ENCODE measurements at regions of chr7 and their contacts with region 1.

Region 1: GRCh38 chr7:128455551-128456254 is at the start of gene HILPDA:
- DNase-seq: peak; percentile 93
- H3K4me3 Mint-ChIP-seq: peak within 1 kb of the TSS; percentile 91
- H3K27ac Mint-ChIP-seq: peak within 1 kb of the TSS; percentile 93
- H3K4me1 Mint-ChIP-seq: peaks cover 56% of the 10 kb centered on the region
- H3K27me3 Mint-ChIP-seq: peaks cover 10% of the 10 kb centered on the region
- total RNA-seq, gene HILPDA: 10.8 to 11.9 TPM

Region 2: DNA sequence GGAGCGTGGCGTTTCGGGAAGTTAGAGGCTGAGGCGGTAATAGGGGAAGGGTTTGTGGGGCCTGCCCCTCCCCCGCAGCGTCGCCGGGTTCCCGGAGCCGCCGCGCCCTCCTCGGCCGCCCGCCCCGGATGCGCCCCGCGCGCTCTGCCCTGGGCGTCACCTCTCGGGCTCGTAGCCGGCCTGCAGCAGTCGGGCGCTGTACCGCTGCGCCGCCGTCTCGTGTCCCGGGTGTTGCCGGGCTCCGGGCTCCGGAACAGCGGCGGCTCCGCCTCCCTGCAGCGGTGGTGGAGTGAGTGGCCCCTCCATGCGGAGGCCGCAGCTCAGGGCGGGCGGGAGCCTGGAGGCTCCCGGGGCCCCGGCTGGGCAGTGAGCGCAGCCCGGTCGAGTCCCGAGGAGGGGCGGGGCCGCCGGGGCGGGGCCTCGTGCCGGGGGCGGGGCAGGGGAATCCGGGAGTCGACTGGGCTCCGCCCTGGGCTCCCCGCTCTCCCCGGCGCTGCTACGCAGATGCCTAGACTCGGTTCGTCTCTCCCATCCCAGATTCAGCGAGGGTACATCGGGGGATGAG is 46.0 kb before region 1 on chr7 and contains the start of gene IMPDH1:
- CTCF ChIA-PET with region 1: interaction called, 11 read pairs
- POLR2A ChIA-PET with region 1: no interaction called
- DNase-seq: peak; percentile 85
- H3K4me3 Mint-ChIP-seq: peak within 1 kb of the TSS; percentile 85
- H3K27ac Mint-ChIP-seq: peak within 1 kb of the TSS; percentile 86
- H3K4me1 Mint-ChIP-seq: peaks cover 37% of the 10 kb centered on the region
- H3K27me3 Mint-ChIP-seq: peaks cover 19% of the 10 kb centered on the region
- total RNA-seq, gene IMPDH1: 70.4 to 72.3 TPM

Region 3: GRCh38 chr7:128443831-128444600 is 11.7 kb before region 1 on chr7:
- CTCF ChIA-PET with region 1: interaction called, 15 read pairs
- POLR2A ChIA-PET with region 1: interaction called, 3 read pairs
- DNase-seq: no peak
- H3K4me3 Mint-ChIP-seq: no peak overlapping the region
- H3K27ac Mint-ChIP-seq: no peak overlapping the region
- H3K4me1 Mint-ChIP-seq: peaks cover 7% of the 10 kb centered on the region
- H3K27me3 Mint-ChIP-seq: no peaks in the 10 kb centered on the region

Region 4: GRCh38 chr7:128550920-128551319 is 95.2 kb after region 1 on chr7:
- CTCF ChIA-PET with region 1: no interaction called
- POLR2A ChIA-PET with region 1: no interaction called
- DNase-seq: no peak
- H3K4me3 Mint-ChIP-seq: no peak overlapping the region
- H3K27ac Mint-ChIP-seq: peak overlapping the region; percentile 31
- H3K4me1 Mint-ChIP-seq: peaks cover 5% of the 10 kb centered on the region
- H3K27me3 Mint-ChIP-seq: no peaks in the 10 kb centered on the region

Measured in activated CD4-positive, alpha-beta T cell treated with anti-CD3 and anti-CD28 coated beads, Interleukin-2, amount 10 ng/mL, durations not matched to agents 7 days and 5 days (primary cell).